GM12878 (cell line): ENCODE measurements at regions of chr12 and their contacts with region 1.

Region 1: GRCh38 chr12:100668945-100669536 is 95.6 kb downstream of the GAS2L3 start:
- DNase-seq: no peak
- ATAC-seq: peak; percentile 94
- H3K4me3 ChIP-seq: no peak overlapping the region
- H3K27ac ChIP-seq: no peak overlapping the region
- H3K4me1 ChIP-seq: no peaks in the 10 kb centered on the region
- H3K27me3 ChIP-seq: no peaks in the 10 kb centered on the region; a peak in 2 of 4 replicates
- CTCF ChIP-seq: peak; percentile 80 to 93 (median 89)
- EP300 ChIP-seq: no peak
- POLR2A ChIP-seq: no peak
- RAD21 ChIP-seq: peak; percentile 66

Region 2: GRCh38 chr12:100234598-100235304 is 434.3 kb before region 1 on chr12:
- CTCF ChIA-PET with region 1: interaction called, 19 read pairs
- POLR2A ChIA-PET with region 1: no interaction called
- RAD21 ChIA-PET with region 1: interaction called, 11 read pairs
- SMC1A ChIA-PET with region 1: interaction called, 3 read pairs
- in situ Hi-C with region 1: no loop called
- intact Hi-C with region 1: loop called (anchors 2 kb)
- DNase-seq: peak; percentile 1
- ATAC-seq: peak; percentile 70
- H3K4me3 ChIP-seq: no peak overlapping the region
- H3K27ac ChIP-seq: no peak overlapping the region
- H3K4me1 ChIP-seq: no peaks in the 10 kb centered on the region
- H3K27me3 ChIP-seq: no peaks in the 10 kb centered on the region
- CTCF ChIP-seq: peak; percentile 71 to 84 (median 75)
- EP300 ChIP-seq: no peak
- POLR2A ChIP-seq: no peak
- RAD21 ChIP-seq: peak; percentile 88

Region 3: GRCh38 chr12:100356644-100357223 is 312.3 kb before region 1 on chr12 and contains the start of gene SLC17A8:
- CTCF ChIA-PET with region 1: interaction called, 3 read pairs
- POLR2A ChIA-PET with region 1: no interaction called
- RAD21 ChIA-PET with region 1: no interaction called
- SMC1A ChIA-PET with region 1: interaction called, 5 read pairs
- in situ Hi-C with region 1: loop called (anchors 10 kb)
- intact Hi-C with region 1: no loop called
- DNase-seq: no peak
- ATAC-seq: peak; percentile 49
- H3K4me3 ChIP-seq: no peak within 1 kb of the TSS
- H3K27ac ChIP-seq: no peak within 1 kb of the TSS
- H3K4me1 ChIP-seq: no peaks in the 10 kb centered on the region
- H3K27me3 ChIP-seq: peaks cover 0 to 3% of the 10 kb centered on the region in 2 experiments; a peak in 1 of 4 replicates
- CTCF ChIP-seq: no peak
- EP300 ChIP-seq: no peak
- POLR2A ChIP-seq: no peak
- RAD21 ChIP-seq: no peak
- polyA plus RNA-seq, gene SLC17A8: not detected

Region 4: DNA sequence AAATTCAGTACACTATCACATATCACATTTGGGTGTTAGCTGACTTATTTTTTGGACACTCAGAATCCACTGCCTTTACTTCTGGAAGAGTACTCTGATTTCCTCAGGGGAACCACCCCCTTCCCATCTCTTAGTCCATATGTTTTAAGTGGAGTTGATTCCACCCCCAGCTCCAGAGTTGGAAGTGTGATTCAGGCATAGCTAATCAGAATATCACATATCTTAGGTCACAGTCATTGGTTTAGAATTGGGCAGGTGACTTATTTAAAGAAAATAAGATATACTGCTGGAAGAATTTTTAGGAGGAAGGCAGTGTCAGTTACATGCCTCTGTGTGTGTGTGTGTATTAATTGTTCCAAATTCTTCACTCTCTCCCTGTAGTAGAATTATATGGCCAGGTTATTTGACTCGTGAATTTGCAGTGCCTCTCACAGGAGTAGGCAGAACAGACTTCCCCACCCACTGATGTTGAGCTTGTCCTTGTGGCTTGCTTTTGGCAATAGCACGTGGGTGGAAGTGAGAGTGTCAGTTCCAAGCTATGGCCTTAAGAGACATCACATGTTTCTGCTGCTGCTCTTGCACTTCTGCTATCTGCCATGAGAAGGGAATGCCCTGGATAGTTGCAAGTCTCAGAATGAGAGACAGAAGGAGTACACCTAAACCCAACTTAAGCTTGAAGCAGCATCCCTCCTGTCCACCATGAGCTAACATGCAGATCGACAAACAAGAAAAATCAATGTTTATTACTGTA is 102.0 kb before region 1 on chr12:
- CTCF ChIA-PET with region 1: interaction called, 11 read pairs
- POLR2A ChIA-PET with region 1: no interaction called
- RAD21 ChIA-PET with region 1: interaction called, 4 read pairs
- SMC1A ChIA-PET with region 1: interaction called, 5 read pairs
- in situ Hi-C with region 1: no loop called
- intact Hi-C with region 1: loop called (anchors 5 kb)
- DNase-seq: peak; percentile 71
- ATAC-seq: peak; percentile 97
- H3K4me3 ChIP-seq: no peak overlapping the region
- H3K27ac ChIP-seq: no peak overlapping the region
- H3K4me1 ChIP-seq: peaks cover 7% of the 10 kb centered on the region
- H3K27me3 ChIP-seq: no peaks in the 10 kb centered on the region
- CTCF ChIP-seq: no peak
- EP300 ChIP-seq: peak in 1 of 2 experiments; percentile 9; a peak in 1 of 4 replicates
- POLR2A ChIP-seq: no peak
- RAD21 ChIP-seq: no peak

Region 5: DNA sequence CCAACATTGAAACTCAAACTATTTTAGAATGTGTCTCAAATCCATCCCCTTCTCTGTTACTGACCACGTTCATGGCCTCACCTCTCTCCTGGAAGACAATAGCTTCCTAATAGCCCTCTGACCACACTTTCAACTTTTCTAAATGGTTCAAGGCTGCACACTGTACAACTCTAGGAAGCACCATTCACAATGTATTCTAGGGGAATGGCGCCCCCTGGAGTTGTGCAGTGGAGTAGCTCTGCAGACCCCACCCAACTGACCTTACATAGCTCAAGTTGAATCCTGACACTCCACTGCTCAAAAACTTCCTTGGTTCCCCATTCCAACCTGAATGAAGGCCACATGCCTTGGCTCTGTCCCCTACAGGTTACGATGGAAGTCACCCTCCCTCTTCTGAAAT is 17.9 kb before region 1 on chr12:
- CTCF ChIA-PET with region 1: interaction called, 13 read pairs
- POLR2A ChIA-PET with region 1: no interaction called
- RAD21 ChIA-PET with region 1: no interaction called
- SMC1A ChIA-PET with region 1: interaction called, 3 read pairs
- in situ Hi-C with region 1: no loop called
- intact Hi-C with region 1: no loop called
- DNase-seq: no peak
- ATAC-seq: no peak
- H3K4me3 ChIP-seq: no peak overlapping the region
- H3K27ac ChIP-seq: no peak overlapping the region
- H3K4me1 ChIP-seq: no peaks in the 10 kb centered on the region
- H3K27me3 ChIP-seq: no peaks in the 10 kb centered on the region; a peak in 1 of 4 replicates
- CTCF ChIP-seq: 0 out of 6 replicates have a peak, but pooled peaks of 1 of the 3 experiments have one; percentile 18
- EP300 ChIP-seq: no peak
- POLR2A ChIP-seq: no peak
- RAD21 ChIP-seq: no peak

Region 6: GRCh38 chr12:100741084-100741711 is 72.2 kb after region 1 on chr12:
- CTCF ChIA-PET with region 1: interaction called, 35 read pairs
- POLR2A ChIA-PET with region 1: no interaction called
- RAD21 ChIA-PET with region 1: interaction called, 10 read pairs
- SMC1A ChIA-PET with region 1: no interaction called
- in situ Hi-C with region 1: no loop called
- intact Hi-C with region 1: loop called (anchors 1 kb)
- DNase-seq: no peak
- ATAC-seq: peak; percentile 51; the same call in 1 of the 3 replicates
- H3K4me3 ChIP-seq: no peak overlapping the region
- H3K27ac ChIP-seq: no peak overlapping the region
- H3K4me1 ChIP-seq: no peaks in the 10 kb centered on the region
- H3K27me3 ChIP-seq: no peaks in the 10 kb centered on the region; a peak in 1 of 4 replicates
- CTCF ChIP-seq: peak; percentile 60 to 67 (median 65)
- EP300 ChIP-seq: no peak
- POLR2A ChIP-seq: no peak
- RAD21 ChIP-seq: peak; percentile 64